ENCODE measurements at regions of chr2 and their contacts with region 1.

Region 1: DNA sequence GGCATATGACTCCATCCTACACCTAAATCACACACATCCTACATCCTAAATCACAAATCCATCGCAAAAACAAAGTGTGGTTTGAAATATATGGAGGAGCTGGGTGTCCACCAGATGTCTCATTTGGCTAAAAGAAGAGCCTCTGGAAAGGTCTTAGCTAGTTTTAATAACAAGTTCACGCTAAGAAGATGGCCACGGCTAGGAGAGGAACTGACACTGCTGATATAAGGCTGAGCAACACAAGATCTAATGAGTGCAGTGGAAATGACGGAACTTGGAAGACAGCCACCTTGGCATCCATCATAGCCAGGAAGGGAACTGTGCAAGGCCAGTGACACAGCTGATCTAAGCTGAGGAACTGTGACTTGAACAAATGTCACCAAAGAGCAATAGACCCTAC is 60.0 kb upstream of the AGAP1 start:
- DNase-seq: peak; percentile 15
- ATAC-seq: peak; percentile 24; the same call in 1 of the 2 replicates
- H3K4me3 ChIP-seq: no peak overlapping the region
- H3K27ac ChIP-seq: no peak overlapping the region
- H3K4me1 ChIP-seq: no peaks in the 10 kb centered on the region
- H3K27me3 ChIP-seq: peaks cover 30% of the 10 kb centered on the region
- CTCF ChIP-seq: 0 out of 2 replicates have a peak, but pooled peaks have one; percentile 17
- POLR2A ChIP-seq: no peak
- RAD21 ChIP-seq: no peak

Region 2: DNA sequence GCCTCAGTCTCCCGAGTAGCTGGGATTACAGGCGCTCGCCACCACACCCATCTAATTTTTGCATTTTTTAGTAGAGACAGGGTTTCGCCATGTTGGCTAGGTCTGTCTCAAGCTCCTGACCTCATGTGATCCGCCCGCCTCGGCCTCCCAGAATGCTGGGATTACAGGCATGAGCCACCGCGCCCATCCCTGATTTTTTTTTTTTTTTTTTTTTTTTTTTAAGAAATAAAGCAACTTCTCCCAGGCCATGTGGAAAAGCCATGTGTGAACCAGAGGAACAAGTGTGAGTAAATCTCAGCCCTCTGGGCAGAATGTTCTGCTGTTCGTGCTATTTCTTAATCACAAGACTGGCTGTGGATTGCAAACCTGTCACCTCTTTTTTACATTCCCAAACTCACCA is 488.4 kb before region 1 on chr2:
- CTCF ChIA-PET with region 1: no interaction called
- POLR2A ChIA-PET with region 1: interaction called, 13 read pairs
- dilution Hi-C with region 1: no loop called
- in situ Hi-C with region 1: no loop called
- intact Hi-C with region 1: no loop called
- DNase-seq: no peak
- ATAC-seq: no peak
- H3K4me3 ChIP-seq: no peak overlapping the region
- H3K27ac ChIP-seq: no peak overlapping the region
- H3K4me1 ChIP-seq: peaks cover 16% of the 10 kb centered on the region
- H3K27me3 ChIP-seq: peaks cover 4% of the 10 kb centered on the region; the same call in 1 of the 2 replicates
- CTCF ChIP-seq: no peak
- POLR2A ChIP-seq: no peak
- RAD21 ChIP-seq: no peak

Region 3: GRCh38 chr2:235614900-235615712 is 181.2 kb after region 1 on chr2:
- CTCF ChIA-PET with region 1: no interaction called
- POLR2A ChIA-PET with region 1: no interaction called
- dilution Hi-C with region 1: no loop called
- in situ Hi-C with region 1: no loop called
- intact Hi-C with region 1: no loop called
- DNase-seq: peak; percentile 85
- ATAC-seq: peak; percentile 61
- H3K4me3 ChIP-seq: no peak overlapping the region
- H3K27ac ChIP-seq: peak overlapping the region; percentile 31; the same call in 1 of the 2 replicates
- H3K4me1 ChIP-seq: peaks cover 9% of the 10 kb centered on the region
- H3K27me3 ChIP-seq: no peaks in the 10 kb centered on the region
- CTCF ChIP-seq: no peak
- POLR2A ChIP-seq: no peak
- RAD21 ChIP-seq: no peak

Measured in IMR-90 (cell line).